IMR-90 (cell line): ENCODE measurements at regions of chr6 and their contacts with region 1.

Region 1: GRCh38 chr6:41920921-41921711 is at the starts of genes BYSL and MED20:
- DNase-seq: peak; percentile 94
- ATAC-seq: peak; percentile 89
- H3K4me3 ChIP-seq: peak within 1 kb of the TSS; percentile 93
- H3K27ac ChIP-seq: peak within 1 kb of the TSS; percentile 99
- H3K4me1 ChIP-seq: peaks cover 10% of the 10 kb centered on the region
- H3K27me3 ChIP-seq: no peaks in the 10 kb centered on the region
- CTCF ChIP-seq: peak; percentile 95
- POLR2A ChIP-seq: peak; percentile 78
- RAD21 ChIP-seq: no peak
- total RNA-seq, gene BYSL: 25.3 and 26.7 TPM in 2 replicates
- total RNA-seq, gene MED20: 35.6 and 38.2 TPM in 2 replicates

Region 2: GRCh38 chr6:41334482-41335040 is 586.6 kb before region 1 on chr6:
- CTCF ChIA-PET with region 1: no interaction called
- POLR2A ChIA-PET with region 1: no interaction called
- dilution Hi-C with region 1: no loop called
- in situ Hi-C with region 1: no loop called
- intact Hi-C with region 1: no loop called
- DNase-seq: no peak
- ATAC-seq: peak; percentile 65
- H3K4me3 ChIP-seq: no peak overlapping the region
- H3K27ac ChIP-seq: no peak overlapping the region
- H3K4me1 ChIP-seq: no peaks in the 10 kb centered on the region
- H3K27me3 ChIP-seq: peaks cover 41% of the 10 kb centered on the region
- CTCF ChIP-seq: peak; percentile 32; the same call in 1 of the 2 replicates
- POLR2A ChIP-seq: no peak
- RAD21 ChIP-seq: peak; percentile 35; the same call in 1 of the 2 replicates

Region 3: GRCh38 chr6:41846666-41847237 is 74.4 kb before region 1 on chr6:
- CTCF ChIA-PET with region 1: interaction called, 4 read pairs
- POLR2A ChIA-PET with region 1: no interaction called
- dilution Hi-C with region 1: no loop called
- in situ Hi-C with region 1: no loop called
- intact Hi-C with region 1: loop called (anchors 2 kb)
- DNase-seq: peak; percentile 94
- ATAC-seq: peak; percentile 98
- H3K4me3 ChIP-seq: no peak overlapping the region
- H3K27ac ChIP-seq: peak overlapping the region; percentile 83; the same call in 1 of the 2 replicates
- H3K4me1 ChIP-seq: peaks cover 2% of the 10 kb centered on the region; the same call in 1 of the 2 replicates
- H3K27me3 ChIP-seq: no peaks in the 10 kb centered on the region
- CTCF ChIP-seq: peak; percentile 88
- POLR2A ChIP-seq: no peak
- RAD21 ChIP-seq: peak; percentile 82

Region 4: GRCh38 chr6:42190554-42191183 is 269.6 kb after region 1 on chr6:
- CTCF ChIA-PET with region 1: interaction called, 10 read pairs
- POLR2A ChIA-PET with region 1: no interaction called
- dilution Hi-C with region 1: no loop called
- in situ Hi-C with region 1: no loop called
- intact Hi-C with region 1: no loop called
- DNase-seq: peak; percentile 92
- ATAC-seq: peak; percentile 74
- H3K4me3 ChIP-seq: no peak overlapping the region
- H3K27ac ChIP-seq: peak overlapping the region; percentile 24; the same call in 1 of the 2 replicates
- H3K4me1 ChIP-seq: peaks cover 9% of the 10 kb centered on the region
- H3K27me3 ChIP-seq: no peaks in the 10 kb centered on the region; the same call in 1 of the 2 replicates
- CTCF ChIP-seq: no peak
- POLR2A ChIP-seq: no peak
- RAD21 ChIP-seq: no peak